Psoas muscle (tissue), 8 donors: ENCODE measurements at regions of chr9 and their contacts with region 1.

Region 1: GRCh38 chr9:133992780-133993634 is 883 bp upstream of the VAV2 start:
- DNase-seq: peak; percentile 88 to 89
- ATAC-seq: peak; percentile 52 to 83 (median 74)
- H3K4me3 ChIP-seq: peak overlapping the region; percentile 64
- H3K27ac ChIP-seq: peak overlapping the region; percentile 63
- H3K4me1 ChIP-seq: peaks cover 4% of the 10 kb centered on the region
- H3K27me3 ChIP-seq: peaks cover 0 to 65% (median 6%) of the 10 kb centered on the region in 3 donors
- CTCF ChIP-seq: peak; percentile 11

Region 2: DNA sequence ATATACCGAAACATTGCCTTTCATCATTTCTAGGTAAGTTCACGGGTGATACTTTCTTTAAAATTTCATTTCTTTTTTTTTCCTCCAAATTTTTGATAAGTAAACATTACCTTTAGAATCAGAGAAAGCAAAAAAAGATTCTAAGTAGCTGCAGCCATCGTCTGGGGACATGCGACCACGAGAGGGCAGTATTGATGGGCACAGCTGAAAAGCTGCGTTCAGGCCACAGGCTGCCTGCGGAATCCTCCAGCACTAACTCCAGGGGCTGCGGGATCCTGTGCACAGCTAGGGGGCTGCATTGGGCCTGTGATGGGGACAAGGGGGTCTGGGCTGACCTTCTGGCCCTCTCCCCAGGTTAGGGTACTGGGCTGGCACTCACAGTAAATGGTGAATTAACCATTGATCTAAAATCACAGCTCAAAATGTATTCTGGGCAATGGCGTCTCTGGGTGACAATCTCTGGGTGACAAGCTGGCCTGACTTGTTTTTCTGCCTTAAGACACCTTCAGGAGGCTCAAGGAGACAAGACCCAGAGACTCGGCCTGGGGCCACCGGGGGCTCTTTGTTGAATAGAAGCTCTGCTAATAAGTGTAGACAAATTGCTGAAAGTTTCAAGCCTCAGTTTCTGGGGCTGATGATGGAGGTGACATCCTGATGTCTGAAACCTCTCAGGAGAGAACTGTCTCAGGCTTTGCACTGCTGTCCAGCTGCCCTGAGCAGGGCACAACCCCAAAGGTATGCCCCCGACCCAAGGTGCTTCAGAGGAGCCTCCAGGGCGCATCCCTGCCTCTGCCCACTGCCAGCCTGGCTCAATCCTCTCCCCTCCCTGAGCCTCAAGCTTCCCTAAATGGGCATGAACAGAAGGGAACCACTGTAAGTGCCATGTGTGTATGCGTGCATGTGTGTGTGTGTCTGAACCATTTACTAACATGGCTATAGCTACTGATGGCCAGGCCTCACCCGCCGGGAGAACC is 210.6 kb before region 1 on chr9:
- intact Hi-C with region 1: loop called in 1 of 2 experiments (anchors 2 kb)
- DNase-seq: peak; percentile 58 to 80
- ATAC-seq: peak in 2 of 4 donors; percentile 61 to 73
- H3K4me3 ChIP-seq: no peak overlapping the region
- H3K27ac ChIP-seq: no peak overlapping the region
- H3K4me1 ChIP-seq: no peaks in the 10 kb centered on the region
- H3K27me3 ChIP-seq: no peaks in the 10 kb centered on the region
- CTCF ChIP-seq: peak; percentile 72

Region 3: DNA sequence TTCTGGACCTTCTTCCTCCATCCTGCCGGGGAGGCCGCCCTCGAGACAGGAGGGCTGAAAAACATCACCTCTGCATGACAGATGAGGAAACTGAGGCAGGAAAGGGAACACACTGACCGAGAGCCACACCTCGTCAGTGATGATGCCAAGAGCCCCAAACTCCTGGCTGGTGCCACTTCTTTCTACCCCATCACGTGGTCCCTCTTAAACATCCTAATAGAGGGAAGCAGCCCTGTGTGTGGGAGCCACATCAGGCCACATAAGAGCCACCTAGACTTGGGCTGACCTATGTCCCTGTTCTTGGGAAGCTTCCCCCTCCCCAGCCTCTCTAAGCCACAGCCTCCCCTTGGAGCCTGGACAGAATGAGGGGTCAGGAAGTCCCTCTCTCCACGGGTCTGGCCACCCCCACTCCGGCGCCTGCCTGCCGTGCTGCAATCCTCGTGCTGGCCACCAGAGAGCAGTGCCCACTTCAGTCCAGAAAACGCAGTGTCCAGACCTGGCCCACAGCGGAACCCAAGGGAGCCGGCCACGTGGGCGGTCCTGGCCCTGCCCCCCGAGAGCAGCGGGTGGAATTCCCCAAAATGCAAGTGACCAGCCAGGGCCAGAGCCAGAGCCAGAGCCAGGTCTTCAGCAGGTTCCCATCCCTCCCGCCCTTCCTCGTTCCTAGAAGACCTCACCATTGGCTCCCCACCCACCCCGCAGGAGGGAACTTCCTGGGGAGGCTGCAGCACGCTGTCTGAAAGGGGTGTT is 200.1 kb before region 1 on chr9:
- intact Hi-C with region 1: loop called (anchors 1 to 2 kb)
- DNase-seq: peak; percentile 79 to 84
- ATAC-seq: peak; percentile 84 to 92 (median 86)
- H3K4me3 ChIP-seq: no peak overlapping the region
- H3K27ac ChIP-seq: no peak overlapping the region
- H3K4me1 ChIP-seq: no peaks in the 10 kb centered on the region
- H3K27me3 ChIP-seq: no peaks in the 10 kb centered on the region
- CTCF ChIP-seq: peak; percentile 93

Region 4: DNA sequence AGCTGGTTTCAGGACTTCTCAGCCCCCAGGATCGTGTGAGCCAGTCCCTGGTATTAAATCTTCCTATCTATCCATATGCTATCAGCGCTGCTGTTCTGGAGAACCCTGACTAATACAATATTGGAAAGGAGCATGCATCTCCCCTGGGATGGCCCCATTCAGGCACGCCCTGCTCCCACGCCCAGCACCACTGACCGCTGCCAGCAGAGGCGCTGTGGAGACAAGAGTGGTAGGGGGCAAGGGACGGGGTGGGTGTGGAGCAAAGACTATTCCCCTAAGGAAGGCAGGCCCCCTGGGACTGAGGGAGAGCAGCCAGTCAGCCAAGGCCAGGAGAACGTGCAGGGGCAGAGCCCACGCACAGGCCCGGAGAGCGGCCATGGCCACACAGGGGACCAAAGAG is 116.9 kb before region 1 on chr9:
- intact Hi-C with region 1: no loop called
- DNase-seq: peak in 1 of 2 donors; percentile 65
- ATAC-seq: no peak
- H3K4me3 ChIP-seq: no peak overlapping the region
- H3K27ac ChIP-seq: no peak overlapping the region
- H3K4me1 ChIP-seq: no peaks in the 10 kb centered on the region
- H3K27me3 ChIP-seq: peaks cover 0 to 27% (median 5%) of the 10 kb centered on the region in 3 donors
- CTCF ChIP-seq: no peak

Region 5: DNA sequence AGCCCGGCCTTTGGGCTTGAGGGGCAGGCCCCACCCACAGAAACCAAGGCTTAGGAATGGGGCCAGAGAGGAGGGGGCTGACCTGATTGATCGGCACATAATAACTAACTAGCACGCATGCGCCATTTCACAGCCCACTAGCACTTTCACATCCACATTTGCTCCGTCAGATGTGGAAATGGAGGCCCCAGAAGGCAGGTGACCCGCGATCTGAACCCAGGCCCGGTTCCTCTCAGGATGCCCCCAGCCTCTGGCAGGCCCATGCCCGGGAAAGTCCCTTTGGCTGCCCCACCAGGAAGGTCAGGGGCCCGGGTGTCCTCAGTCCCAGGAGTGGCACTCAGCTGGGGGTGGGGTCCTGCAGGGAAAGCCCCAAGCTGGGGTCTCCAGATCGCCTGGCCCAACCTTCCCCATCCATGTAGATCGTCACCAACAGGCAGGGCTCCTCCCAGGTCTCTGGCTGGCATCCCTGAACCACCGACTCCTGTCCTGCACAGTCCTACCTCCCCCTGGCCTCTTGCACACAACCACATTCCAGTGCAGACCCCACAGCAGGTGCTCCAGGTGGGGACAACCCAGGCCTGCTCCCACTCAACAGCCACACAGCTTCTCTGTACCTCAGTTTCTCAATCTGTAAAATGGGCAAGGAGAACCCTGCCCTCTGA is 47.6 kb before region 1 on chr9:
- intact Hi-C with region 1: no loop called
- DNase-seq: peak; percentile 8 to 43
- ATAC-seq: no peak
- H3K4me3 ChIP-seq: no peak overlapping the region
- H3K27ac ChIP-seq: no peak overlapping the region
- H3K4me1 ChIP-seq: no peaks in the 10 kb centered on the region
- H3K27me3 ChIP-seq: peaks cover 0 to 18% (median 6%) of the 10 kb centered on the region in 3 donors
- CTCF ChIP-seq: no peak

Region 6: DNA sequence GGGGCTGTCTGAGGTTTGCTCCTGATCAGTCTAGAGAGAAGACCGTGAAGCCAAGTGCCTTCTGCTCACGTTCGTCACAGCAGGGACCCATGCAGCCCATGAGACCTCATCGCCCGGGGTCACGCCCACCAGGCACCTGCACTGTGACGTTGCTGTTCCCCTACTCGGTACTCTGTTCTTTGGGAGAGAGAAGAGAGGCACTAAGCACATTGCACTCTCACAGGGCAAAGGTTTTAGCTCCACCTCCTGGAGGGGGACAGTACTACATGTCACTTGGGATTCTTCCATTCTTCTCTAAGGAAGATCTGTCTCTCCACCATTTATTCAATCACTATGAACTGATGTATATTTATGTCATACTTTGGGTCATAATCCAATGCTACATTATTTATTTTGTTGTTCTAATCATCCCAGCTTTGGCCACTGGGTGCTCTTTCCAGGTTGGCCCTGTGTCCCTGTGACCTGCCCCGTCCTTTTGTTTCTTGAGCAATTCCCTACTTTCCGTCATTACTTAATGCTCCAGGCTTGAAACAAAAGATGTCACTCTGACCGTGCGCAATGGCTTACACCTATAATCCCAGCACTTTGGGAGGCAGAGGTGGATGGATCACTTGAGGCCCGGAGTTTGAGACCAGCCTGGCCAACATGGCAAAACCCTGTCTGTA is 106.2 kb after region 1 on chr9:
- intact Hi-C with region 1: loop called in 1 of 2 experiments (anchors 5 kb)
- DNase-seq: no peak
- ATAC-seq: peak; percentile 86 to 90 (median 88)
- H3K4me3 ChIP-seq: no peak overlapping the region
- H3K27ac ChIP-seq: no peak overlapping the region
- H3K4me1 ChIP-seq: no peaks in the 10 kb centered on the region
- H3K27me3 ChIP-seq: peaks cover 0 to 8% (median 2%) of the 10 kb centered on the region in 3 donors
- CTCF ChIP-seq: peak; percentile 90

Region 7: DNA sequence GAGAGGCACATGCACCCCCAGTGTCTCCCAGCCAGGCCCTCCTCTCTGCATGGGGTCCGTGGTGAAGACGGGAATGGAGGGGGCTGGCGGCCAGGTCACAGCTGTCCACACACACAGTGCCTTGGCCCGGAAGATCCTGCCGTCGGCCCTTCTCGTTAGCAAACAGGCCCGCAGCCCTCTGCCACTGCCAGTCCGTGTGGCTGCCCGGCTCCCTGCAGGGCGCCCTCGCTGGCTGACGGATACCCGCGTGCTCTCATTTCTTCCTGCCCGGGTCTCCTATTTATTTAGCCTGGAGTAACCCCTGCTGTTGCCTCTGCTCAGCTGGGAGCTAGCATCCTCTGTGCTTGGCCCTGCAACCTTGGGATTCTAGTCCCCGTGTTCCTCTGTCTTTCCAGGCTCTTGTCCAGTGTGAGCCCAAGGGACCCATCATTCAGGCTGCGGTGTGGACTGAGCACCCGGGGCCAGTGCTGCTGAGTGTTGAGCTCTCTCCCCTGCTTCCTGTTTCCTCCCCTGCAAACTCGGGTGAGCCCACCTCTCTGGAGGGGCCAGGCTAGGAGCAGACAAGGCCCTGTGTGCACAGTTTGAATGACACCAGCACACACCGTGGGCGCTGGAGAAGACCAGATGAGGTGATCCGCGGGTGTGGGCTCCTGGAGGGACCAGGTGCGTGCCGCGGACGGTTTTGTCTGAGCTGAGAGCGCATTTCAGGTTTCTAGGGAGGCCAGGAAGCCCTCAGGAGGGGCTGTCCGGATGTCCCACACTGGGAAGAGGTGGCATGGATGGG is 186.0 kb after region 1 on chr9:
- intact Hi-C with region 1: no loop called
- DNase-seq: peak; percentile 80 to 89
- ATAC-seq: peak; percentile 24 to 51 (median 46)
- H3K4me3 ChIP-seq: no peak overlapping the region
- H3K27ac ChIP-seq: no peak overlapping the region
- H3K4me1 ChIP-seq: peaks cover 11% of the 10 kb centered on the region
- H3K27me3 ChIP-seq: no peaks in the 10 kb centered on the region
- CTCF ChIP-seq: no peak

Region 8: DNA sequence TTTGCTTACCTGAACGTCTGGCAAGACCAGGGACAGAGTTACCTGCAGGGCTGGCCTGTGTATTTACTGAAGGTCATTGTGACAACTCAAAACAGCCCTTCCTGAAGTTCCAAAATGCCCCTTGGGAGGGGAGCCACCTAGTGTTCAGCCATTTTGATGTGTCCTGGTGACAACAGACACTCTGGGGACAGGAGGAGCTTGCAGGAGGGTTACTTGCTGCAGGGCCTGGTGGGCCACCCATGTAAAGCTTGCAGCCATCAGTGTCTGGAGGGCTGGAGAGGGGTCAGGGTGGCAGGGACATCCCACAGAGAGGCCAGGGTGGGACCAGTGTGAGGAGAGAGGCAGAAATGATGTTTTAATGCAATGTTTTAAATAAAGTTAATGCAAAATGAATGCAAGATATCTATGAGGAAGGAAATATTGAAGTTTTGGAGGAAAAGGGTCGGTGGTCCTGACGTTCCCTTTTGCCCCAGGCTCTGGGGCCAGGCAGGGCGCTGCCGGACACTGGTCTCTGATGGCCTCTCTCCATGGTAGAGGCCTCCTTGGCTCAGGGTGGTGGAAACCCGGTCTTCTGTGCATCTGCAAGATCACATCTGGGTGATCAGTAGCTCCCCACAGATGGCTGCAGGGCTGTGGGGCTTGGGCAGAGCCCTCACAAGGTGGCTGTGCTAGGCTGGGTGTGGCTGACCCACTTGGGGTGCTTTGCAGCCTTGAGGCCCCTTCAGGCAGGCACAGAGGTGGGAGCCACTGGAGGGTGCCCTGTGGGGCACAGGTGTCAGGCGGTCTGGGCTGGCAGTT is 225.0 kb after region 1 on chr9:
- intact Hi-C with region 1: no loop called
- DNase-seq: peak; percentile 15 to 34
- ATAC-seq: peak; percentile 44 to 76 (median 59)
- H3K4me3 ChIP-seq: no peak overlapping the region
- H3K27ac ChIP-seq: no peak overlapping the region
- H3K4me1 ChIP-seq: peaks cover 5% of the 10 kb centered on the region
- H3K27me3 ChIP-seq: no peaks in the 10 kb centered on the region
- CTCF ChIP-seq: peak; percentile 18